ENCODE measurements at regions of chr16 and their contacts with region 1.

Region 1: DNA sequence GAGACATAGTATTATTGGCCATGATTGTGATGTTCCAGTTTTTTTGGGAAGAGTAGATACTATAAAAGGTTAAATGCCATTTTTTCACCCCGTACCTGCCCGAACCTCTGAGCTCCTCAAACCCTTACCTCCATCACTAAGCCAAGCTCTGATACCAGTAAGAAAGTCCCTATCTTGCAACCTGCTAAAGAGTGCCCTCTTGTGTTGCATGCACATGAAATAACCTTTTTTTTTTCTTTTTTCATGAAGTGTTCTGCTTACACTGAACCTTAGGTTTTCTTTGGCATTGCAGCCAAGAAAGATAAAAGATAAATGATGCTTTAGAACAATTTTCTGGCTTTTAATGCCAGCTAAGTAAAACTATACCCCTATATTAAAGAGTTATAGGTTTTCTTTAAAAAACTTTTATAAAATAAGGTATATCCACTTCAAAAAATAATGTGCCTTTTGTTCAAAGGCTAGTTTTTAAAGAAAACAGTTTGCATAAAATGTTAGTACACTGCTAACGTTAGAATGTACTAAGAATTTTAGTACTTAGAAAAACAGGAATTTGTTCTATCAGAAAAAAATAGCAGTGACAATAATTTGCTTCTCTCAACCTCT is 295.3 kb upstream of the PMFBP1 start:
- DNase-seq: no peak
- ATAC-seq: no peak
- H3K4me3 ChIP-seq: no peak overlapping the region
- H3K27ac ChIP-seq: no peak overlapping the region
- H3K4me1 ChIP-seq: no peaks in the 10 kb centered on the region
- H3K27me3 ChIP-seq: no peaks in the 10 kb centered on the region

Region 2: DNA sequence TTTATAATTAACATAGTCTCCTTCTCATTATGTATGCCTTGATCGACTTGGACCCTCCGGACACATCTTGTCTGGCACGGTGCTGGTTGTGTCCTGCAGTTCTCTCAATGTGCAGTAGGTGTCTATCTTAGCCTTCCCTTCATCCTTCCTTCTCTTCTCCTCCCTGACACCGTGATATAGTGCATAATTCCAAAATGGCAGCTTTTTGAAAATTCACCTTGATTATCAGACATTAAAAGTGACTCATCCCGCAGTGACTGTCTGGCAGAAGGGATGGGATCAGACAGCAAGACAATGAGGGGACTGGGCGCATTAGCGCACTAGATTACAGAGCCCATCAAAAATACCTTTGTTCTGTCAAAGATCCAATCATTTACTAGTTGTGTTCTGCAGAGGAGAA is 225.3 kb before region 1 on chr16:
- intact Hi-C with region 1: loop called in 1 of 4 experiments (anchors 10 kb)
- DNase-seq: no peak
- ATAC-seq: peak; percentile 63 to 67
- H3K4me3 ChIP-seq: no peak overlapping the region
- H3K27ac ChIP-seq: no peak overlapping the region
- H3K4me1 ChIP-seq: no peaks in the 10 kb centered on the region
- H3K27me3 ChIP-seq: no peaks in the 10 kb centered on the region

Region 3: DNA sequence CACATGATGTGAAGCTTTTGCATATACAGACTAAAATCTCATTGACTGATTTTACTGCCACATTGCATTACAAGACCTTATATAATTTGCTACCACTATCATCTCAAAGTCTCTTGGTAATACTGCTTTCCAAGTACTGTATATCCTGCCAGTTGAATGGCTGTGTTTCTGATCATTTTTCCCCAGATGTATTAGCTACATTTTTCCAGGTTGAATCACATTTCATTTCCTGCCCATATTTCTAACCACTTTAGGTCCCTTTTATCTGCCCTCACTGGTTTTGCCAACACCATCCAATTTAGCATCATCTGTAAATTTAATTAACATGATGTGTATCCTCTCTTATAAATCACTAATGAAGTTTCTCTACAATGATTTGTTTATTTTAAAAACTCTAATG is 70.4 kb after region 1 on chr16:
- intact Hi-C with region 1: no loop called
- DNase-seq: no peak
- ATAC-seq: no peak
- H3K4me3 ChIP-seq: no peak overlapping the region
- H3K27ac ChIP-seq: no peak overlapping the region
- H3K4me1 ChIP-seq: no peaks in the 10 kb centered on the region
- H3K27me3 ChIP-seq: no peaks in the 10 kb centered on the region